Activated naive CD4-positive, alpha-beta T cell treated with anti-CD3 and anti-CD28 coated beads for 36 hours (primary cell): ENCODE measurements at regions of chrX and their contacts with region 1.

Region 1: DNA sequence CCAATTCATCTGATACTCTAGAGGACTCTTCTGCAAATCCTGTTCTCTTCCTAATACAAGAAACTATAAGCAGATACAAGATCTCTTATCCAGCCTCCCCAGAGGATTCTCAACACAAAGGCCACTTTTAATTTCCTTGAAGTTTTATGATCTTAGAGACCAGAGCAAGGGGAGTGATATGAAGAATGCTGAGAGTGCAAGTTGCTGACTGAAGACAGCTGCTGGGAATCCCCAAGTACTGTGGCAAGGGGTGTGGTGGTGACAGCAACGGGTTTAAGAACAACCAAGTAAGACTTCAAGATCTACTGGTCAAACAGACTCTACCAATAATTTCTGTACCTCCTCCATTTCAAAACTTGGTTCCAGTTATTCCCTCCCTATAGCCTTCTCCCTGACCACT is 7.0 kb downstream of the AMMECR1 start:
- DNase-seq: peak; percentile 55
- H3K4me3 Mint-ChIP-seq: no peak overlapping the region
- H3K27ac Mint-ChIP-seq: no peak overlapping the region
- H3K4me1 Mint-ChIP-seq: peaks cover 60% of the 10 kb centered on the region
- H3K27me3 Mint-ChIP-seq: no peaks in the 10 kb centered on the region

Region 2: DNA sequence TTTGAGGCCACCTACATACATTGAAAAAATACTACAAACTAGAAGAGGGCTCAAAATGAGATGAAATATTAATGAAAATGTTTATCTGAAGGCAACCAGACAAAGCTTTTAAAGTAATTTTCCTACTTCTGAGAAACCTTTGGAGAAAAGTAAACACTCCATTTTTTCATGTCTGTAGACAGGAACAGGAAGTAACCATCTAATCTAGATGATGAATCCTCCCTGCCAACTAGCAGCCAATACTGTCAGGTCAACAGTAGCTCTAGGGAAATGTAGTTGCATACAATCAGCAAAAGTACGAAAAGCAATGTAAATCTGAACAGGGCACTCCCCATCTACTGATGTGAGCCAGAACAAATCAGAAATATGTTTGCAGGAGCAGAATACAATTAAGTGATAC is 42.0 kb before region 1 on chrX:
- CTCF ChIA-PET with region 1: no interaction called
- intact Hi-C with region 1: loop called (anchors 2 kb)
- DNase-seq: no peak
- H3K4me3 Mint-ChIP-seq: no peak overlapping the region
- H3K27ac Mint-ChIP-seq: peak overlapping the region; percentile 61
- H3K4me1 Mint-ChIP-seq: peaks cover 39% of the 10 kb centered on the region
- H3K27me3 Mint-ChIP-seq: no peaks in the 10 kb centered on the region